HepG2 (cell line): ENCODE measurements at regions of chr3 and their contacts with region 1.

Region 1: DNA sequence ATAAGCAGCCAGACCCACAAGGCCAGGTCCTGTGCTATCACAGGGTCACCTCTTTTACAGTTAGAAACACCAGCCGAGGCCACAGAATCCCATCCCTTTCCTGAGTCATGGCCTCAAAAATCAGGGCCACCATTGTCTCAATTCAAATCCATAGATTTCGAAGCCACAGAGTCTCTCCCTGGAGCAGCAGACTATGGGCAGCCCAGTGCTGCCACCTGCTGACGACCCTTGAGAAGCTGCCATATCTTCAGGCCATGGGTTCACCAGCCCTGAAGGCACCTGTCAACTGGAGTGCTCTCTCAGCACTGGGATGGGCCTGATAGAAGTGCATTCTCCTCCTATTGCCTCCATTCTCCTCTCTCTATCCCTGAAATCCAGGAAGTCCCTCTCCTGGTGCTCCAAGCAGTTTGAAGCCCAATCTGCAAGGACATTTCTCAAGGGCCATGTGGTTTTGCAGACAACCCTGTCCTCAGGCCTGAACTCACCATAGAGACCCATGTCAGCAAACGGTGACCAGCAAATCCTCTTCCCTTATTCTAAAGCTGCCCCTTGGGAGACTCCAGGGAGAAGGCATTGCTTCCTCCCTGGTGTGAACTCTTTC is 39.6 kb downstream of the TGM4 start:
- DNase-seq: peak; percentile 60
- ATAC-seq: peak; percentile 88
- H3K4me3 ChIP-seq: no peak overlapping the region
- H3K27ac ChIP-seq: no peak overlapping the region
- H3K4me1 ChIP-seq: no peaks in the 10 kb centered on the region
- H3K27me3 ChIP-seq: no peaks in the 10 kb centered on the region
- CTCF ChIP-seq: peak; percentile 92
- EP300 ChIP-seq: no peak
- POLR2A ChIP-seq: no peak
- RAD21 ChIP-seq: peak; percentile 79

Region 2: GRCh38 chr3:44535364-44535763 is 378.6 kb before region 1 on chr3:
- CTCF ChIA-PET with region 1: interaction called, 20 read pairs
- POLR2A ChIA-PET with region 1: no interaction called
- in situ Hi-C with region 1: loop called (anchors 5 kb)
- intact Hi-C with region 1: loop called (anchors 1 kb)
- DNase-seq: no peak
- ATAC-seq: no peak
- H3K4me3 ChIP-seq: no peak overlapping the region
- H3K27ac ChIP-seq: no peak overlapping the region
- H3K4me1 ChIP-seq: no peaks in the 10 kb centered on the region
- H3K27me3 ChIP-seq: no peaks in the 10 kb centered on the region; a peak in 2 of 5 replicates
- CTCF ChIP-seq: no peak
- EP300 ChIP-seq: no peak
- POLR2A ChIP-seq: no peak
- RAD21 ChIP-seq: no peak

Region 3: DNA sequence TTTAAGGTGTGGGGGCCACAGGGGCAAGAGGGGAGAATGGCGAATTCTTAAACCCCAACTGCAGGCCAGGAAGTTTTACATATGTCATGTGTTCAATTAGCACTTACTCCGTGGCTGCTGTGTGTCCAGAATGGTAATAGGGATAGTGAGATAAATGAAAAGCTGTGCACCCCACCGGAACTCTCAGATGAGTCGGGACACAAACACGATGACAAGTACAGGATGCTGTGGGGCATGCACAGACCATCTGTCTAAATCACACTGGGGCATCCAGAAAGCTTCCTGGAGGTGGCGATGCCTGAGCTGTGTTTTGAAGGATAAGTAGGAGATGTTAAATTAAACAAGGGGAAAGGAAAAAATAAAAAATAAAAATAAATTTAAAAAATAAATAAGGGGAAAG is 330.4 kb after region 1 on chr3:
- CTCF ChIA-PET with region 1: no interaction called
- POLR2A ChIA-PET with region 1: no interaction called
- in situ Hi-C with region 1: no loop called
- intact Hi-C with region 1: no loop called
- DNase-seq: no peak
- ATAC-seq: no peak
- H3K4me3 ChIP-seq: no peak overlapping the region
- H3K27ac ChIP-seq: no peak overlapping the region
- H3K4me1 ChIP-seq: no peaks in the 10 kb centered on the region
- H3K27me3 ChIP-seq: peaks cover 0 to 3% of the 10 kb centered on the region in 2 experiments; a peak in 1 of 5 replicates
- CTCF ChIP-seq: no peak
- EP300 ChIP-seq: no peak
- POLR2A ChIP-seq: no peak
- RAD21 ChIP-seq: no peak